ENCODE measurements at regions of chr10 and their contacts with region 1.

Region 1: DNA sequence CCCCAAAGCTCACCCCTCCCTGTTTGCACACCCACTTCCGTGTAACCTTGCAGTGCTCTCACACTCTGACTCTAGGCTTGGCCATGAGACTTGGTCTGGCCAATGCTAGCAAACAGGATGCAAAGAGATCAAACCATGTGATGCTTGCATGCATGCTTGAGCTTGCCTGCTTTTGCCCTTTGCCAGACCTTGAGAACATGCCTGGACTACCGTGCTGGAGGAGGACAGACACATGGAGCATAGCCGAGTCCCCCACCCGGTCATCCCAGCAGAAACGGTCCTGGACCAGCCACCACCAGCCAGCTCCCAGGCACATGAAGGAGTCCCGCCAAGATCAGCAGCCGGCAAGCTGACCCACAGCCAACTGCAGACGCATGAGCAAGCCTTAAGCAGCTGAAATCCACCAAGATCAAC is 23.4 kb downstream of the PYROXD2 start:
- DNase-seq: peak in 4 of 5 donors; percentile 49 to 78 (median 68)
- ATAC-seq: peak; percentile 27 to 79 (median 45)
- H3K4me3 ChIP-seq: no peak overlapping the region
- H3K27ac ChIP-seq: peak overlapping the region in 1 of 12 donors; percentile 27
- H3K4me1 ChIP-seq: peaks cover 0 to 19% (median 5%) of the 10 kb centered on the region in 12 donors
- H3K27me3 ChIP-seq: no peaks in the 10 kb centered on the region
- CTCF ChIP-seq: no peak
- POLR2A ChIP-seq: no peak

Region 2: DNA sequence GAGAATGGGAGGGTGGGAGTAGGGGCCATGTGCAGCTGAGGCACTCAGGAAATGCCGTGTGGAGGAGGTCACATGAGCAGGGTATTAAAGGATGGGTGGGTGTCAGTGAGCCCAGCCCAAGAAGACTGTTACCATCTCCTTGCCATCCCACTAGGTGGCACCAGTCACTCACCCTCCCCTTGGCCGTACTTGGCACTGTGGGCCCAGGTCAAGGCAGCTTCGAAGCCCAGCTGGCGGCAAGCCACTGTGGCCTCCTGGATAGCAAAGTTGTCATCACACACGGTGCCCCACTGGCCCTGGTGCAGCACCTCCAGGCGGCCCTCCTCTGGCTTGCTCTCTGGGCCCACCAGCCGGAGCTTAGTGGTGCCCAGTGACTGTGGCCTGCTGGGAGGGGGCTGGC is 129.0 kb before region 1 on chr10:
- intact Hi-C with region 1: loop called in 1 of 10 experiments (anchors 10 kb)
- DNase-seq: peak; percentile 61 to 87 (median 78)
- ATAC-seq: peak; percentile 40 to 83 (median 76)
- H3K4me3 ChIP-seq: no peak overlapping the region
- H3K27ac ChIP-seq: no peak overlapping the region
- H3K4me1 ChIP-seq: peaks cover 0 to 8% (median under 1%) of the 10 kb centered on the region in 12 donors
- H3K27me3 ChIP-seq: peaks cover 0 to 3% (median 0%) of the 10 kb centered on the region in 9 donors
- CTCF ChIP-seq: peak; percentile 31 to 66 (median 57)
- POLR2A ChIP-seq: no peak

Region 3: GRCh38 chr10:98349508-98349922 is 42.1 kb before region 1 on chr10:
- intact Hi-C with region 1: loop called in 1 of 10 experiments (anchors 5 kb)
- DNase-seq: peak; percentile 58 to 76 (median 69)
- ATAC-seq: peak; percentile 53 to 90 (median 75)
- H3K4me3 ChIP-seq: peak overlapping the region in 1 of 12 donors; percentile 17
- H3K27ac ChIP-seq: peak overlapping the region in 1 of 12 donors; percentile 12
- H3K4me1 ChIP-seq: peaks cover 0 to 38% (median 9%) of the 10 kb centered on the region in 12 donors
- H3K27me3 ChIP-seq: peaks cover 0 to 26% (median 8%) of the 10 kb centered on the region in 9 donors
- CTCF ChIP-seq: no peak
- POLR2A ChIP-seq: no peak

Measured in heart left ventricle (tissue), 16 donors.